K562 (cell line): ENCODE measurements at regions of chr1 and their contacts with region 1.

Region 1: GRCh38 chr1:8015036-8015808 is 10.9 kb downstream of the ERRFI1 start:
- DNase-seq: peak; percentile 62 to 79 (median 64)
- ATAC-seq: peak; percentile 93
- H3K4me3 ChIP-seq: no peak overlapping the region
- H3K27ac ChIP-seq: no peak overlapping the region
- H3K4me1 ChIP-seq: peaks cover 0 to 7% of the 10 kb centered on the region in 2 experiments; a peak in 1 of 5 replicates
- H3K27me3 ChIP-seq: peaks cover 0 to 2% of the 10 kb centered on the region in 2 experiments; a peak in 2 of 5 replicates
- CTCF ChIP-seq: peak; percentile 77 to 93 (median 85)
- EP300 ChIP-seq: no peak
- POLR2A ChIP-seq: no peak
- RAD21 ChIP-seq: peak; percentile 84 to 97

Region 2: DNA sequence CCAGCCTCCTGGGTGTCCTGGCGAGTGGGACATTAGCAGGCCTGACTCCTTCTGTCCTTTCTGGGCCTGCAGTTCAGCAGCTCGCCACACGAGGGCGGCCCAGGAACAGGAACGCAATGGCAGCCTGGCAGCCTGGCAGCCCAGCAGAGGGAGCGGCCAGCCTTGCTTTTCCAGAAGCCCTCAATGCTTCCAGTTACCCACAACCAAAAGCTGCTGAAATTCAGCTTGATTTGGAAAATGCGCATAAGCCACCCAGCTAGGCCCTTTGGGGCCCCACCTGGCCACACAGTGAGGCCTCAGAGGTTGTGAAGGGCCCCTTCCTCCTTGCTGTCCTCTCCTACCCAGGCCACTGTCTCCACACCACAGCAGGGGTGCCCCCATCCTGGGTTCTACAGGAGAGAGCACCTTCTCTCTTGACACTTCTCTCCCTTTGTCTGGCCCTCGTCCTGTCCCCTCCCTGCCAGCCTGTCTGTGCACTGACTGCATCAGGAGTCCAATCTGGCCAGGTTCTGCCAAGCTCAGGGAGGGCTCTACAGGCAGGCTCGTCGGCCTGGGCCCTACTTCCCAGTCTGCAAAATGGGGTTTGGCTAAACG is 347.5 kb before region 1 on chr1:
- CTCF ChIA-PET with region 1: interaction called, 25 read pairs
- POLR2A ChIA-PET with region 1: no interaction called
- in situ Hi-C with region 1: loop called (anchors 10 kb)
- intact Hi-C with region 1: loop called (anchors 5 kb)
- DNase-seq: peak; percentile 82 to 85 (median 84)
- ATAC-seq: peak; percentile 85
- H3K4me3 ChIP-seq: no peak overlapping the region
- H3K27ac ChIP-seq: no peak overlapping the region
- H3K4me1 ChIP-seq: peaks cover 0 to 35% of the 10 kb centered on the region in 2 experiments; a peak in 2 of 5 replicates
- H3K27me3 ChIP-seq: peaks cover 27 to 58% of the 10 kb centered on the region in 2 experiments; a peak in 4 of 5 replicates
- CTCF ChIP-seq: peak; percentile 99
- EP300 ChIP-seq: no peak
- POLR2A ChIP-seq: no peak
- RAD21 ChIP-seq: peak; percentile 94 to 98

Region 3: DNA sequence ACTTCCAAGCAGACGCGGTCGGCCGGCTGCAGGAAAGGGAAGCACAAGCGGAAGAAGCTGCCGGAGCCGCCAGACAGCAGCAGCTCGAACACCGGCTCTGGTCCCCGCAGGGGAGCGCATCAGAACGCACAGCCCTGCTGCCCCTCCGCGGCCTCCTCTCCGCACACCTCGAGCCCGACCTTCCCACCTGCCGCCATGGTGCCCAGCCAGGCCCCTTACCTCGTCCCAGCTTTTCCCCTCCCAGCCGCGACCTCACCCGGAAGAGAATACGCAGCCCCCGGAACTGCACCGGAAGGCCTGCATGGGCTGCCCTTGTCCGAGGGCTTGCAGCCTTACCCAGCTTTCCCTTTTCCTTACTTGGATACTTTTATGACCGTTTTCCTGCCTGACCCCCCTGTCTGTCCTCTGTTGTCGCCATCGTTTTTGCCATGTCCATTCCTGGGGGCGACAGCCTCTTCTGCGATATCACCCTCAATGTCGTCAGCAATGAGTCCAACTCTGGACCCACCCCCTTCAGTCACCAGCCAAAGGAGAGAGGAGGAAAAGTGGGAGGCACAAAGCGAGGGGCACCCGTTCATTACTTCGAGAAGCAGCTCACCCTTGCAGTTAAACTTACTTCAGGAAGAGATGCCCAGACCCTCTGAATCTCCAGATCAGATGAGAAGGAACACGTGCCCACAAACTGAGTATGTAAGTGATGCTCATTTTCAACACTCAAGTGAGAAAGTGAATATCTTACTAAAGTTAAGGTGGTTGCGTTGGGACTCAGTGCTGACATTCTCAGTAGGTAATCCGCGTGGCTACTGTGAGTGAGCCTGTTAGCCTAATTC is 187.9 kb before region 1 on chr1:
- CTCF ChIA-PET with region 1: no interaction called
- POLR2A ChIA-PET with region 1: no interaction called
- in situ Hi-C with region 1: no loop called
- intact Hi-C with region 1: no loop called
- DNase-seq: peak; percentile 68 to 80 (median 70)
- ATAC-seq: peak; percentile 90
- H3K4me3 ChIP-seq: peak overlapping the region; percentile 52
- H3K27ac ChIP-seq: peak overlapping the region; percentile 84
- H3K4me1 ChIP-seq: peaks cover 0 to 4% of the 10 kb centered on the region in 2 experiments; a peak in 3 of 5 replicates
- H3K27me3 ChIP-seq: no peaks in the 10 kb centered on the region
- CTCF ChIP-seq: no peak
- EP300 ChIP-seq: no peak
- POLR2A ChIP-seq: peak; percentile 86
- RAD21 ChIP-seq: no peak

Region 4: DNA sequence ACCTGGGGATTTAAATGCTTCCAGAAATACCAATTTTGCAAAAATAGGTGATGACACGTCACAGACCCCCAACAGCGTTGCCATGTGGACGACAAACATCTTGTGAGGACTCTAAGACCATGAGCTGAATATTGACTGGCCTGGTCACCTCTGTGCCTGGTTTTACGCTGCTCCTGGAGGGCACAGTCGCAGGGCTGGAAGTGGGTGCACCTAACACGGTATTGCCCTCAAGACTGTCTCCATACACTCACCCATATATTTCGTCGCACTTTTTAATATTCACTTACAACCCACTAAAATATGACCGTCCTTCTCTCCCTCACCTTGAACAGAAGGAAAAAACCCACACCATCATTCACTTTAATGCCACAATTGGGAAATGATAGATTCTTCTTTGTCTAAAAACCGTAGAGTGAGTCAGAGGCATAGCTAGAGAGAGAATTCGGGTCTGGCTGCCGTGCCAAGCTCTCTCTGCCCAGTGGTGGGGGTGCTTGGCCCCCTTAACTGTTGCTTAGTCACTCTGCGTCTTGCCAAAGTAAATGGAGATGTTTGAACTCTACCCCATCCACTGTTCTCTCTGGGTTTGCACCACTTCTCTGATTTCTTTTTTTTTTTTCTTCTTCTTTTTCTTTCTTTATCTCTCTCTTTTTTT is 121.6 kb before region 1 on chr1:
- CTCF ChIA-PET with region 1: no interaction called
- POLR2A ChIA-PET with region 1: no interaction called
- in situ Hi-C with region 1: no loop called
- intact Hi-C with region 1: no loop called
- DNase-seq: no peak
- ATAC-seq: no peak
- H3K4me3 ChIP-seq: no peak overlapping the region
- H3K27ac ChIP-seq: no peak overlapping the region
- H3K4me1 ChIP-seq: no peaks in the 10 kb centered on the region; a peak in 1 of 5 replicates
- H3K27me3 ChIP-seq: peaks cover 21 to 42% of the 10 kb centered on the region in 2 experiments; a peak in 4 of 5 replicates
- CTCF ChIP-seq: no peak
- EP300 ChIP-seq: no peak
- POLR2A ChIP-seq: no peak
- RAD21 ChIP-seq: no peak

Region 5: DNA sequence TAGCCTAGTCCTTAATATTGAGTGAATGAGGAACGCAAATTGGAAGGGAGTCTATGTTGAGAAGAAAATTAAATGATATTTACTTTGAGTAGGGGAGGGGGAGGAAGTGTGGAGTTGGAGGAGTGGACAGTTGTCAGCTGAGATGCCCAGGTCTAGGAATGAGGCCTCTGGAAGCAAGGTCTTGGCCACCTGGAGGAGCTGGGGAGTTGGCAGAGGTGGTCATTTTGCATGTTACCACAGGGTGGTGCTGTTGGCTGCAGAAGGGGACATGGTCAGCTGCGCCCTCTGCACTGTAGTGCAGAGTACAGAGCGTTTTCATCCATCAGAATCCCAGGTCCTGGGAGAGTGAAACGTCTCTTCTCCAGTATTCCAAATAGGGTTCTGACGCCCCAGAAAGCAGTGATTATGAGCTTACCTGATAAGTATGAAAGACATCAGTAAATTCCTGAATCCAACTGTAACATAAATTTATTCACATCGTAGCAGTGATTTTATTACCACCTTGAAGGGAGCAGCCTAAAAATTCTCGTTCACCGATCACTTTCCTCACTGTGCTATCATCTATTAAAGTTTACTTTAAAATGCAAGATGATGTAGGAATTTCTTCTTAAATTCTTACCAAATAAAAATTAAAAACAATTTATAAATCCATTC is 39.9 kb before region 1 on chr1:
- CTCF ChIA-PET with region 1: interaction called, 37 read pairs
- POLR2A ChIA-PET with region 1: interaction called, 3 read pairs
- in situ Hi-C with region 1: loop called (anchors 5 kb)
- intact Hi-C with region 1: loop called (anchors 2 kb)
- DNase-seq: peak; percentile 83 to 87 (median 86)
- ATAC-seq: peak; percentile 100
- H3K4me3 ChIP-seq: no peak overlapping the region
- H3K27ac ChIP-seq: no peak overlapping the region
- H3K4me1 ChIP-seq: no peaks in the 10 kb centered on the region
- H3K27me3 ChIP-seq: no peaks in the 10 kb centered on the region
- CTCF ChIP-seq: peak; percentile 98 to 100 (median 99)
- EP300 ChIP-seq: no peak
- POLR2A ChIP-seq: no peak
- RAD21 ChIP-seq: peak; percentile 79 to 89

Region 6: DNA sequence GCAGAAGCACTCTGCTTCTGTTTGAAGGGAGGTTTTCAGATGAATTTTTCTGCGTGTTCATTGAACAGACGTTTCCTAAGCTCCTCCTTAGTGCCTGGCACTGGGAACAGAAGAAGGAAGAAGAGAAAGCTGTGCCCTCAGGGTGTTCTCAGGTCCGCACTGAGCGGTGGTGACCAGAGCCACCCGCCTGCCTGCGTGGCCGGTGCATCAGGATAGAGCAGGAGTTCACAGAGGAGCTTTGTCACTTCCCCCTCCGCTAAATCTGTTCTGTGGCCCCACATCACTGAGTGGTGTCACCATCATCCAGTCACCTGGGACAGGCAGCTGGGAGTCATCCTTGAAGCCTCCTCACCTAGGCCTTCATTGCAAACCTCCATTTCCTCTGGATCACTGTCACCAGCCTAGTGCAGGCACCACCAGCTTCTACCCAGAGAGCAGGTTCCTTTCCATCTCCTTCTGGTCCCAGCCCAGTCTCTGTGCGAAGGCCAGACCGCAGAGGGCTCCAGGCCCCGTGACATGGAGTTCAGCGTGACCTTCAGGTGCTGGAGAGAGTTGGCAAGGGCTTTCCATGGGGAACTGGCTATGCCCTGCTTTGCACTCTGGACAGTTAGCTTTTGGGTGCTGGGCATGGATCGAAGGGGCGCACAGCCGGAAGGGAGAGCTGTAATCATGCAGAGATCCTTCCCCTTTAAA is 32.0 kb before region 1 on chr1:
- CTCF ChIA-PET with region 1: interaction called, 21 read pairs
- POLR2A ChIA-PET with region 1: interaction called, 4 read pairs
- in situ Hi-C with region 1: loop called (anchors 5 kb)
- intact Hi-C with region 1: loop called (anchors 2 kb)
- DNase-seq: no peak
- ATAC-seq: no peak
- H3K4me3 ChIP-seq: no peak overlapping the region
- H3K27ac ChIP-seq: no peak overlapping the region
- H3K4me1 ChIP-seq: no peaks in the 10 kb centered on the region; a peak in 1 of 5 replicates
- H3K27me3 ChIP-seq: no peaks in the 10 kb centered on the region
- CTCF ChIP-seq: no peak
- EP300 ChIP-seq: no peak
- POLR2A ChIP-seq: no peak
- RAD21 ChIP-seq: no peak

Region 7: GRCh38 chr1:8206391-8207162 is 191.4 kb after region 1 on chr1:
- CTCF ChIA-PET with region 1: no interaction called
- POLR2A ChIA-PET with region 1: no interaction called
- in situ Hi-C with region 1: no loop called
- intact Hi-C with region 1: no loop called
- DNase-seq: no peak
- ATAC-seq: no peak
- H3K4me3 ChIP-seq: no peak overlapping the region
- H3K27ac ChIP-seq: no peak overlapping the region
- H3K4me1 ChIP-seq: peaks cover 5 to 16% of the 10 kb centered on the region in 2 experiments
- H3K27me3 ChIP-seq: peaks cover 6 to 47% of the 10 kb centered on the region in 2 experiments; a peak in 3 of 5 replicates
- CTCF ChIP-seq: no peak
- EP300 ChIP-seq: no peak
- POLR2A ChIP-seq: no peak
- RAD21 ChIP-seq: no peak